ENCODE measurements at regions of chr5 and their contacts with region 1.

Region 1: GRCh38 chr5:134577796-134578363 is 52.4 kb downstream of the JADE2 start:
- DNase-seq: peak; percentile 83
- ATAC-seq: peak; percentile 76
- H3K4me3 Mint-ChIP-seq: no peak overlapping the region
- H3K27ac Mint-ChIP-seq: peak overlapping the region; percentile 17
- H3K4me1 Mint-ChIP-seq: no peaks in the 10 kb centered on the region
- H3K27me3 Mint-ChIP-seq: no peaks in the 10 kb centered on the region

Region 2: GRCh38 chr5:134411546-134412266 is 166.2 kb before region 1 on chr5 and contains the start of gene CDKN2AIPNL:
- CTCF ChIA-PET with region 1: interaction called, 17 read pairs
- DNase-seq: peak; percentile 92
- ATAC-seq: peak; percentile 100
- H3K4me3 Mint-ChIP-seq: peak within 1 kb of the TSS; percentile 96
- H3K27ac Mint-ChIP-seq: peak within 1 kb of the TSS; percentile 87
- H3K4me1 Mint-ChIP-seq: peaks cover 30% of the 10 kb centered on the region
- H3K27me3 Mint-ChIP-seq: no peaks in the 10 kb centered on the region
- total RNA-seq, gene CDKN2AIPNL: 28.0 to 33.8 TPM

Region 3: DNA sequence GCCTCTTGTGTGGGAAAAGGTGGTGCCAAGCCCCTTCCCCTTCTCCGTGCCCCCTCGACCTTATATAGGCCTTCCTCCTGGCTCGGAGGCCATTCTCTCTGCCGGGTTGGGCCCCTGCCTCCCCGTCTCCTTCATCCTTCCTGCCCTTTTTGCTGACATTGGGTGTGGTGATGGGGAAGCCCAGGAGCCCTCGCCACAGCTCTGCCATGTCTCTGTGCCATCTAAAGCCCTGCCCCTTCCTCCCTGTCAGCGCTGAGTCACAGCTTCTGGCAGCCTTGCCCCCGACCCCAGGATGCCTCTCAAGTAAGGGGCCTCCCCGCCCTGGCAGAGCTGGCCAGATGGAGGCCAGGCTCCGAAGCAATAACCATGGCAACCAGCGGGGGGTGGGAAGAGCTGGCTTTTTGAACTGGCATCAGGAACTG is 22.0 kb before region 1 on chr5:
- CTCF ChIA-PET with region 1: interaction called, 13 read pairs
- DNase-seq: peak; percentile 87
- ATAC-seq: peak; percentile 90
- H3K4me3 Mint-ChIP-seq: peak overlapping the region; percentile 12
- H3K27ac Mint-ChIP-seq: peak overlapping the region; percentile 91
- H3K4me1 Mint-ChIP-seq: peaks cover 29% of the 10 kb centered on the region
- H3K27me3 Mint-ChIP-seq: no peaks in the 10 kb centered on the region

Region 4: GRCh38 chr5:134592141-134592746 is 14.4 kb after region 1 on chr5:
- CTCF ChIA-PET with region 1: interaction called, 31 read pairs
- DNase-seq: no peak
- ATAC-seq: no peak
- H3K4me3 Mint-ChIP-seq: no peak overlapping the region
- H3K27ac Mint-ChIP-seq: no peak overlapping the region
- H3K4me1 Mint-ChIP-seq: peaks cover 31% of the 10 kb centered on the region
- H3K27me3 Mint-ChIP-seq: no peaks in the 10 kb centered on the region

Measured in activated CD8-positive, alpha-beta memory T cell treated with anti-CD3 and anti-CD28 coated beads, Interleukin-2, amount 10 ng/mL, durations not matched to agents 7 days and 5 days (primary cell).